T-cell (primary cell): ENCODE measurements at regions of chr2 and their contacts with region 1.

Region 1: DNA sequence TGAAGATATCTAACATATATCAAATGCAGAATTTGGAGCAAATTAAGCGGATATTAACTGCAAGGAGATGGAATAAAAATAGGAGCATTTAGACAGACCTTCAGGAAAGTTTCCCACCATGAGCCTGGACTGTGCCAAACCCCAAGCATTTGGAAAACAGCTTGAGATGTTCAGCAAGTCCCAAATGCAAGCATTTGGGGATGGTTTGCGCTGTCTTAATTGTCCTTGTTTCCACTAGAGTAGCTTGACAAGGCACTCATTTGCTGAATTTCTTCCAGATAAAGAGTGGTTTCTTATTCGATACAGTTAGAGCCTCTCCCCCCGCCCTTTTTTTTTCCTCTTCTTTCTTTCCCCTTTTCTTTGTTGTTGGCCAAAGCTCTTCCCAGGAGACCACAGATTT is 77.1 kb upstream of the CDC42EP3 start:
- DNase-seq: no peak
- ATAC-seq: no peak
- H3K4me3 ChIP-seq: no peak overlapping the region
- H3K4me3 Mint-ChIP-seq: no peak overlapping the region
- H3K27ac ChIP-seq: no peak overlapping the region
- H3K27ac Mint-ChIP-seq: no peak overlapping the region
- H3K4me1 ChIP-seq: no peaks in the 10 kb centered on the region
- H3K4me1 Mint-ChIP-seq: peaks cover 0 to 6% (median 4%) of the 10 kb centered on the region in 3 donors
- H3K27me3 ChIP-seq: no peaks in the 10 kb centered on the region
- H3K27me3 Mint-ChIP-seq: no peaks in the 10 kb centered on the region

Region 2: DNA sequence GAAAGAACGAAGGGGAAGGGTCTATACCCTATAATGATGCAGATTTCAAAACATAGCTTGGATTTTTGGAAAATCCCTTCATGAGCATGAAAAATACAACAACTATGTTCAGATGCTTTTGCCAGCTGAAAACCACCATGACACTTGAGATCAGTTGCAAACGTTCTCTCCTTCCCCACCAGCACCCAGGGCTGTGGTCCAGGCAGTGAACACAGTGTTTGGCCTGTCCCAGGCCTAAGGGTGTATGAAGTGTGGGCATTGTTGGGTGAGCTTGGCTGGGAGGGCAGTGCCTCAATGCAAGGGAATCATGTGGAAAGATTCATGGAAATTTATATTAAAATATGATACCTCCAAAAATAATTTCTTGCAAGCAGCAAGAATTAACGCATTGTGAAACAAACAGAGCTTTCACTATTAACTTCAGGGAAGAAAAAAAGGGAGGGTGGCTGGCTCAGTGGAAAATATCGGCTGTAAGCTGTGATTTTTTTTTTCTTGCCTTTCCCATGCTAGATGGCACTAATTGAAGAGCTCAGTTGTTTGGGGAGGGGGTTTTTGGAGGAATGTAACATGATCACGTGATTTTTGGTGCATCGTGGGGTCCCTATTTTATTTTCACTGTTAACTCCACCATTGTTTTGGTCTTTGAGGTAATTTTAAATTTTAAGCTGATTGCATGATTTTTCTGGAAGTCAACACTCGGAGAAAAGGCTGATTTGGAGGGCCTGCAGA is 129.1 kb before region 1 on chr2:
- CTCF ChIA-PET with region 1: interaction called in 1 of 2 experiments, 10 read pairs
- POLR2A ChIA-PET with region 1: no interaction called
- DNase-seq: no peak
- ATAC-seq: no peak
- H3K4me3 ChIP-seq: no peak overlapping the region
- H3K4me3 Mint-ChIP-seq: no peak overlapping the region
- H3K27ac ChIP-seq: no peak overlapping the region
- H3K27ac Mint-ChIP-seq: no peak overlapping the region
- H3K4me1 ChIP-seq: peaks cover 19 to 65% of the 10 kb centered on the region in 2 experiments
- H3K4me1 Mint-ChIP-seq: peaks cover 52 to 84% (median 84%) of the 10 kb centered on the region in 3 donors
- H3K27me3 ChIP-seq: no peaks in the 10 kb centered on the region
- H3K27me3 Mint-ChIP-seq: no peaks in the 10 kb centered on the region

Region 3: DNA sequence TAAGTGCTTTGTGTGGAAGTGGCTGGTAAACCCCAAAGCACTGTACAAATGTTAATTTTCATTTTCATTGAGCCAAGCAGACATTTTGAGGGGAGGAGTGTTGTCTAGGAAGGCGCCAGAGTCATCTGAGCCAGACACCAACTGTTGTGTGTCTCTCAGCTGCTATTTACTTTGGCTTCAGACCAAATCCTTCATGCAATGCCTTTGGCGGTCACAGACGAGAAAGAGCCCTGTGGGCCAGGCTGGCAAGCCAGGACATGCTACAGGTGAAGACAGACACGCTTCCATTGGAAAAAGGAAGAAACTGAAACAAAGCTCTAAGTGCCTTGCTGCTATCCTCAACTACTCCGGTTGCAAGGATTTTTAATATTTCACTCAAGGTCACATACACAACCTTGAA is 38.3 kb after region 1 on chr2:
- CTCF ChIA-PET with region 1: no interaction called
- POLR2A ChIA-PET with region 1: interaction called in 1 of 2 experiments, 10 read pairs
- DNase-seq: no peak
- ATAC-seq: no peak
- H3K4me3 ChIP-seq: no peak overlapping the region
- H3K4me3 Mint-ChIP-seq: no peak overlapping the region
- H3K27ac ChIP-seq: no peak overlapping the region
- H3K27ac Mint-ChIP-seq: no peak overlapping the region
- H3K4me1 ChIP-seq: no peaks in the 10 kb centered on the region
- H3K4me1 Mint-ChIP-seq: no peaks in the 10 kb centered on the region
- H3K27me3 ChIP-seq: no peaks in the 10 kb centered on the region
- H3K27me3 Mint-ChIP-seq: no peaks in the 10 kb centered on the region